Endothelial cell of umbilical vein (primary cell): ENCODE measurements at regions of chr14 and their contacts with region 1.

Region 1: GRCh38 chr14:98120831-98121464 is 1151.0 kb downstream of the BCL11B start:
- DNase-seq: no peak
- H3K4me3 ChIP-seq: no peak overlapping the region
- H3K27ac ChIP-seq: no peak overlapping the region
- H3K4me1 ChIP-seq: no peaks in the 10 kb centered on the region
- H3K27me3 ChIP-seq: no peaks in the 10 kb centered on the region
- CTCF ChIP-seq: no peak
- POLR2A ChIP-seq: no peak

Region 2: GRCh38 chr14:98099527-98099926 is 21.4 kb before region 1 on chr14:
- CTCF ChIA-PET with region 1: no interaction called
- POLR2A ChIA-PET with region 1: no interaction called
- dilution Hi-C with region 1: no loop called
- intact Hi-C with region 1: loop called (anchors 2 kb)
- DNase-seq: no peak
- H3K4me3 ChIP-seq: no peak overlapping the region
- H3K27ac ChIP-seq: no peak overlapping the region
- H3K4me1 ChIP-seq: no peaks in the 10 kb centered on the region
- H3K27me3 ChIP-seq: no peaks in the 10 kb centered on the region
- CTCF ChIP-seq: no peak
- POLR2A ChIP-seq: no peak

Region 3: GRCh38 chr14:98144964-98145363 is 24.0 kb after region 1 on chr14:
- CTCF ChIA-PET with region 1: no interaction called
- POLR2A ChIA-PET with region 1: no interaction called
- dilution Hi-C with region 1: no loop called
- intact Hi-C with region 1: no loop called
- DNase-seq: no peak
- H3K4me3 ChIP-seq: no peak overlapping the region
- H3K27ac ChIP-seq: no peak overlapping the region
- H3K4me1 ChIP-seq: no peaks in the 10 kb centered on the region
- H3K27me3 ChIP-seq: no peaks in the 10 kb centered on the region
- CTCF ChIP-seq: no peak
- POLR2A ChIP-seq: no peak

Region 4: DNA sequence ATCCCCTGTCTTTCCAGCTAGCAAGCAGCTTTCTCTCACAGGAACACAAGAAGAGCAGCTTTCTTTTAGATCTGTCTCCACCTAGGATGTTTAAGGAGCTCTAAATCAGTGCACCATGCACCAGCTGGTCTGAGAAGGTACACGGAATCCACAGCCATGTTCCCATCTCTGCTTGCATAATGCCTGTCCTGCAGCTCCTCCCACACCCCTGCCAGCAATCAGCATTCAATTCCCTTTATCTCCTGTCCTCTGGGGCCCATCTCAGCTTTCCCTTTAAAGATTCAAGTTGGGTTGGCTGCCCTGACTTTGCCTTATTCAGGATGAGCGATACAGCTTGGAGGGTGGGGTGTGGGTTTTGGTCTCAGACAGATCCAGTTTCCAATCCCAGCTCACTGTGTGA is 324.8 kb after region 1 on chr14:
- CTCF ChIA-PET with region 1: no interaction called
- POLR2A ChIA-PET with region 1: no interaction called
- dilution Hi-C with region 1: no loop called
- intact Hi-C with region 1: no loop called
- DNase-seq: no peak
- H3K4me3 ChIP-seq: no peak overlapping the region
- H3K27ac ChIP-seq: no peak overlapping the region
- H3K4me1 ChIP-seq: no peaks in the 10 kb centered on the region
- H3K27me3 ChIP-seq: no peaks in the 10 kb centered on the region
- CTCF ChIP-seq: no peak
- POLR2A ChIP-seq: no peak